ENCODE measurements at regions of chr10 and their contacts with region 1.

Region 1: GRCh38 chr10:46539596-46540411 is 16.7 kb downstream of the GPRIN2 start:
- DNase-seq: peak; percentile 73
- H3K4me3 Mint-ChIP-seq: peak overlapping the region; percentile 27
- H3K27ac Mint-ChIP-seq: peak overlapping the region; percentile 89
- H3K4me1 Mint-ChIP-seq: peaks cover 55% of the 10 kb centered on the region
- H3K27me3 Mint-ChIP-seq: no peaks in the 10 kb centered on the region
- CTCF ChIP-seq: no peak

Region 2: GRCh38 chr10:46175296-46175695 is 364.5 kb before region 1 on chr10:
- CTCF ChIA-PET with region 1: no interaction called
- intact Hi-C with region 1: no loop called
- DNase-seq: no peak
- H3K4me3 Mint-ChIP-seq: no peak overlapping the region
- H3K27ac Mint-ChIP-seq: no peak overlapping the region
- H3K4me1 Mint-ChIP-seq: no peaks in the 10 kb centered on the region
- H3K27me3 Mint-ChIP-seq: peaks cover 26% of the 10 kb centered on the region
- CTCF ChIP-seq: no peak

Region 3: GRCh38 chr10:46328853-46329689 is 210.7 kb before region 1 on chr10:
- CTCF ChIA-PET with region 1: no interaction called
- intact Hi-C with region 1: no loop called
- DNase-seq: no peak
- H3K4me3 Mint-ChIP-seq: no peak overlapping the region
- H3K27ac Mint-ChIP-seq: no peak overlapping the region
- H3K4me1 Mint-ChIP-seq: peaks cover 14% of the 10 kb centered on the region
- H3K27me3 Mint-ChIP-seq: peaks cover 66% of the 10 kb centered on the region
- CTCF ChIP-seq: no peak

Region 4: DNA sequence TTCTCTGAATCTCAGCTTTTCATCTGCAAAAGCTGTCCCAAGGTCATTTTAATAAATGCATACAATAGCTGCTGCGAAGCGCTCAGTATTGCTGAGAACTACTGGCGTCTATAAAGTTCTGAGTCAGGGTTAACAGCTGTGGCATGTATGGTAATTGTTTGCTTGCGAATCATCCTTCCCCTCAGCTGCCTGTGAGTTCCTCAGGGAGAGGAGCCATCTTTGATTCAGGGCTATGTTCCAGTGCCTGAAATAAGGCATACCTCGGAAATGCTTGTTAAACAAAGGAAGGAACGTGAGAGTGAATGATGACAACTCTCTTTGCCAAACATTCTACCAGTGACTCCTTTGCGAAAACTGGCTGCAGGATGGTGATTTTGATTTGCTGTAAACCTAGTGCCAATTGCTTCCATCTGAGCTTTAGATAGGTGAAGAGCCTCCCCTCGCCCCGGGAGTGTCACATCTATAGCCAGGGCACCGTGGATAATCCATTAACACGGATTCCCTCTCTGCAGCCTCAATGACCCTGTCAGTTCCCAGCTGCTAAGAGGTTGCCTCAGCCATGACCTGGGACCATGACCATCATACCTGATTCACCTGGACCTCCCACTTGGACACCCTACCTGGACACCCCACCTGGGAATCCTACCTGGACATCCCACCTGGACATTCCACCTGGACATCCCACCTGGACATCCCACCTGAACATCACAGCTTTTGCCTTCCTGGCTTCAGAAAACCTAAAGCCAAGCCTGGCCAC is 23.0 kb before region 1 on chr10:
- CTCF ChIA-PET with region 1: interaction called, 12 read pairs
- intact Hi-C with region 1: no loop called
- DNase-seq: peak; percentile 13
- H3K4me3 Mint-ChIP-seq: no peak overlapping the region
- H3K27ac Mint-ChIP-seq: no peak overlapping the region
- H3K4me1 Mint-ChIP-seq: peaks cover 8% of the 10 kb centered on the region
- H3K27me3 Mint-ChIP-seq: no peaks in the 10 kb centered on the region
- CTCF ChIP-seq: no peak

Region 5: DNA sequence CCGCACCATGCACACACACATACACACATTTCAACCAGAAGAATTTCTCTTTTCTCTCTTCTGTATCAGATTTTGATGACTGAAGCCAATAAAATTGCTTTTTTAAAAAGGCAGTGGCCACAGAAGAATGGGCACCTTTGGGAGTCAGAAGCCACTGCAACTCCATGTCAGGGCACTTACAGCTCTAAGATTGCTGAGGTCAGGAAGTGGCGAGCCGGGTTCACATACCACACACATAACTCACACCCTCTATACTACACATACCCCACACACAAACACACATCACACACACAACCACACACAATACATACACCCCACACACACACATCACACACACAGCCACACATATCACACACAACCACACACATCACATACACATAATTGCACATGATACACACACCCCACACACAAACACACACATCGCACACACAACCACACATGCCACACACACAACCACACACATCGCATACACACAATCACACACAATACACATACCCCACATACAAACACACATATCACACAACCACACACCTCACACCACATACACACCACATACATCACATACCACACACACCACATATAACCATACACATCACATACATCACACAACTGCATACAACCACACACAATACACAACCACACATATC is 14.5 kb before region 1 on chr10:
- CTCF ChIA-PET with region 1: interaction called, 15 read pairs
- intact Hi-C with region 1: loop called (anchors 1 kb)
- DNase-seq: peak; percentile 78
- H3K4me3 Mint-ChIP-seq: no peak overlapping the region
- H3K27ac Mint-ChIP-seq: no peak overlapping the region
- H3K4me1 Mint-ChIP-seq: no peaks in the 10 kb centered on the region
- H3K27me3 Mint-ChIP-seq: no peaks in the 10 kb centered on the region
- CTCF ChIP-seq: no peak